Activated B cell treated with CpG ODN at 0.5 μM for 24 hours (primary cell): ENCODE measurements at regions of chr1 and their contacts with region 1.

Region 1: DNA sequence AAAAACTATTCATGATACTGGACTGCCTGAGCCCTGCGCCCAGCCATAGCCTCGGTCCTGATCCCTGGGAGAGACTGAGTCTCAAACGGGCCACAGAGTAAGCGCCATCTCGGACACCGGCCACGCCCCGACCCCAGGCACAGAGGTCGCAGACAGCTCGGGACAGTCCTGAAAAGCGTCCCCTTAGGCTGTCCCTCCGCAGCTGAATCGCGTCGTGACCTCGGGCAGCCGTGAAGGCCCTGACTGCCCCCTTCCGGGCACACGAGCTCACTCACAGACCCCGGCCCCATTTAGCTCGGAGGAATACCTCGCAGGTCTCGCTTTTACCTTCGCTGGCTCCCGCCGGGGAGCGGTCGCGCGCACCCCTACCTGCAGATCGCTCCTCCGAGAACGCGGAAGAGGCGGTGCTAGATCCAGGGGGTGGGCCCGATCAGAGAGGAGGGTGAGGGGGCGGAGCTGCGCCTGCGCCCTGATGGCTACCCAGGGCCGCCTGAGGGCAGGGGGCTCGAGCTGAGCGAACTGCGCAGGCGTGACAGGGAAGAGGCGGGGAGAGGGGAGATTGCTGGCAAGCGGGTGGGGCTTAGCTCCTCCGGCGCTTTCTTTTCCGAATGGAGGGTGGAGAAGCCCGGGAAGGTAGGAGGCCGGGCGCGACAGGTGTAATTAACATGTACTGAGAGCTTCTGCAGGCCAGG is at the start of gene MKNK1:
- DNase-seq: peak; percentile 97
- ATAC-seq: peak; percentile 99
- H3K4me3 Mint-ChIP-seq: peak within 1 kb of the TSS; percentile 95
- H3K27ac Mint-ChIP-seq: peak within 1 kb of the TSS; percentile 86
- H3K4me1 Mint-ChIP-seq: peaks cover 17% of the 10 kb centered on the region
- H3K27me3 Mint-ChIP-seq: no peaks in the 10 kb centered on the region
- CTCF ChIP-seq: no peak
- total RNA-seq, gene MKNK1: 42.3 and 45.0 TPM in 2 replicates

Region 2: GRCh38 chr1:46616277-46617107 is 12.5 kb after region 1 on chr1 and contains the start of gene MOB3C:
- CTCF ChIA-PET with region 1: interaction called, 3 read pairs
- POLR2A ChIA-PET with region 1: interaction called, 108 read pairs
- intact Hi-C with region 1: loop called (anchors 1 kb)
- DNase-seq: peak; percentile 62
- ATAC-seq: peak; percentile 89
- H3K4me3 Mint-ChIP-seq: peak within 1 kb of the TSS; percentile 92
- H3K27ac Mint-ChIP-seq: peak within 1 kb of the TSS; percentile 87
- H3K4me1 Mint-ChIP-seq: peaks cover 64% of the 10 kb centered on the region
- H3K27me3 Mint-ChIP-seq: no peaks in the 10 kb centered on the region
- CTCF ChIP-seq: no peak
- total RNA-seq, gene MOB3C: 9.7 and 10.7 TPM in 2 replicates

Region 3: GRCh38 chr1:46667782-46668760 is 64.1 kb after region 1 on chr1 and contains the start of gene ATPAF1:
- CTCF ChIA-PET with region 1: no interaction called
- POLR2A ChIA-PET with region 1: interaction called, 5 read pairs
- intact Hi-C with region 1: loop called (anchors 5 kb)
- DNase-seq: peak; percentile 55
- ATAC-seq: peak; percentile 91
- H3K4me3 Mint-ChIP-seq: peak within 1 kb of the TSS; percentile 80
- H3K27ac Mint-ChIP-seq: no peak within 1 kb of the TSS
- H3K4me1 Mint-ChIP-seq: peaks cover 16% of the 10 kb centered on the region
- H3K27me3 Mint-ChIP-seq: no peaks in the 10 kb centered on the region
- CTCF ChIP-seq: no peak
- total RNA-seq, gene ATPAF1: 21.2 and 24.5 TPM in 2 replicates